Activated CD8-positive, alpha-beta T cell treated with anti-CD3 and anti-CD28 coated beads for 36 hours (primary cell): ENCODE measurements at regions of chr1 and their contacts with region 1.

Region 1: GRCh38 chr1:225318706-225319575 is 108.9 kb downstream of the LBR start:
- DNase-seq: peak; percentile 26
- ATAC-seq: peak; percentile 70
- H3K4me3 Mint-ChIP-seq: no peak overlapping the region
- H3K27ac Mint-ChIP-seq: no peak overlapping the region
- H3K4me1 Mint-ChIP-seq: no peaks in the 10 kb centered on the region
- H3K27me3 Mint-ChIP-seq: peaks cover 1% of the 10 kb centered on the region
- CTCF ChIP-seq: peak; percentile 78

Region 2: DNA sequence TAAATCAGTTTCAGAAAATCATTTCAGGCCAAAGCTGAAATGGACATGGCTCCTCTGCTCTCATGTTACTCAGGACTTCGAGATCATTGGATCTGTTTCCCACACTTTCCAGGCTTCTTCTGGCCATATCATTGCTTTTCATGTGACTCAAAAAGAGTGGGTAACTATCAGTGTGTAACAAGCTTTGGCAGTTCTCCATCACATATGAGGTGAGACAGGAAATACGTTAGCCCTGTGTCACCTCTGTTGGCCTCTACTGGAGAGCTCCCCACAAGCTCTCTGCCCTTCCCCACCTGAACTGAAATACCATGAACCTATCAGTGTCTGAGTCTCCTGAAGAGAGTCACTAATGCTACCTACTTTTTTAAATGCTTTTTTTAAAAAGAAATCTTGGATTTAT is 19.3 kb before region 1 on chr1:
- CTCF ChIA-PET with region 1: interaction called, 36 read pairs
- POLR2A ChIA-PET with region 1: no interaction called
- intact Hi-C with region 1: no loop called
- DNase-seq: no peak
- ATAC-seq: no peak
- H3K4me3 Mint-ChIP-seq: no peak overlapping the region
- H3K27ac Mint-ChIP-seq: no peak overlapping the region
- H3K4me1 Mint-ChIP-seq: no peaks in the 10 kb centered on the region
- H3K27me3 Mint-ChIP-seq: peaks cover 5% of the 10 kb centered on the region
- CTCF ChIP-seq: no peak

Region 3: GRCh38 chr1:225304996-225305395 is 13.9 kb before region 1 on chr1:
- CTCF ChIA-PET with region 1: interaction called, 36 read pairs
- POLR2A ChIA-PET with region 1: no interaction called
- intact Hi-C with region 1: no loop called
- DNase-seq: no peak
- ATAC-seq: no peak
- H3K4me3 Mint-ChIP-seq: no peak overlapping the region
- H3K27ac Mint-ChIP-seq: no peak overlapping the region
- H3K4me1 Mint-ChIP-seq: no peaks in the 10 kb centered on the region
- H3K27me3 Mint-ChIP-seq: no peaks in the 10 kb centered on the region
- CTCF ChIP-seq: no peak

Region 4: GRCh38 chr1:225332686-225333085 is 13.7 kb after region 1 on chr1:
- CTCF ChIA-PET with region 1: interaction called, 12 read pairs
- POLR2A ChIA-PET with region 1: no interaction called
- intact Hi-C with region 1: no loop called
- DNase-seq: no peak
- ATAC-seq: no peak
- H3K4me3 Mint-ChIP-seq: no peak overlapping the region
- H3K27ac Mint-ChIP-seq: no peak overlapping the region
- H3K4me1 Mint-ChIP-seq: no peaks in the 10 kb centered on the region
- H3K27me3 Mint-ChIP-seq: no peaks in the 10 kb centered on the region
- CTCF ChIP-seq: no peak

Region 5: DNA sequence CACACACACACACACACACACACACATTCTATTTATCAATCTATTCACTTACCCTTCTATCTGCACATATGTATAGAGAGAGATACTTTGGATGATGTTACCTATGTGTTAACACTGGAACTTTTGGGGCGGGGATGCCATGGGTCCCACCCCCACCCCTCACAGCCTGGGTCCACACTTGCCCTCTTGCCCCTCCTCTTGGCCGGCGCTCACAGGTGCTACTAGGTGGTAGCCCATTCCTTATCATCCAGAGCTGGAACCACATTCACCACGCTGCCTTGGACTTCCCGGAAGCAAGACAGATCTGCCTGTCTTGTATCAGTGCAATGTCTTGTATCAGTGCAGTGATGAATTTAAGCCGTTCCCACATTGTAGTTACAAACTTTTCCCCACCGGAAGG is 23.8 kb after region 1 on chr1:
- CTCF ChIA-PET with region 1: interaction called, 10 read pairs
- POLR2A ChIA-PET with region 1: no interaction called
- intact Hi-C with region 1: no loop called
- DNase-seq: no peak
- ATAC-seq: no peak
- H3K4me3 Mint-ChIP-seq: no peak overlapping the region
- H3K27ac Mint-ChIP-seq: no peak overlapping the region
- H3K4me1 Mint-ChIP-seq: peaks cover 5% of the 10 kb centered on the region
- H3K27me3 Mint-ChIP-seq: peaks cover 15% of the 10 kb centered on the region
- CTCF ChIP-seq: no peak